Astrocyte of the cerebellum (primary cell): ENCODE measurements at regions of chr14 and their contacts with region 1.

Region 1: GRCh38 chr14:68966872-68967301 is 12.2 kb downstream of the ACTN1 start:
- DNase-seq: no peak
- H3K4me3 ChIP-seq: no peak overlapping the region
- CTCF ChIP-seq: no peak

Region 2: DNA sequence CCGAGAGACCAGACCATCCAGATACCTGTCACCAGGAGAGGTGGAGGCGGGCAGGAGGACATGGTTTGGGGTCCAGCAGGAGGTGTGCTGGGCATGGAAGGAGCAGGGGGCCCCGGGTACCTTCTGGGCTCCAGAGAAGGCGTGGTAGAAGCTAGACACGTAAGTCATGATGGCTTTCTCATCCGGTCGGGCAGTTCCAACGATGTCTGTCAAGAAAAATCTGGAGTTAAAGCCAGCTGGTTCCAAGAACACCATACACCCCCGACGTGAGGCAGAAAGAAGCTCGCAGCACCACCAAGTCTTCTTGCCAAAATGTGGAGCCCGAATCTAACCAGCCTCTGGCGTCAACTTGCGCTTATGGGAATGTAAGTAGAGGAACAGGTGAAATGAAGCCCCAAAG is 64.5 kb before region 1 on chr14:
- in situ Hi-C with region 1: loop called (anchors 5 kb)
- DNase-seq: no peak
- H3K4me3 ChIP-seq: no peak overlapping the region
- CTCF ChIP-seq: no peak